Activated T-helper 1 cell treated with anti-CD3 and anti-CD28 coated beads, Interleukin-12 subunit alpha, Interleukin-12 subunit beta, Interleukin-2, Interleukin-4 antibody, amounts not matched to agents 30 ng/mL and 10 ng/mL and 1 ng/mL, durations not matched to agents 14 hours and 24 hours and 36 hours (primary cell): ENCODE measurements at regions of chr6 and their contacts with region 1.

Region 1: DNA sequence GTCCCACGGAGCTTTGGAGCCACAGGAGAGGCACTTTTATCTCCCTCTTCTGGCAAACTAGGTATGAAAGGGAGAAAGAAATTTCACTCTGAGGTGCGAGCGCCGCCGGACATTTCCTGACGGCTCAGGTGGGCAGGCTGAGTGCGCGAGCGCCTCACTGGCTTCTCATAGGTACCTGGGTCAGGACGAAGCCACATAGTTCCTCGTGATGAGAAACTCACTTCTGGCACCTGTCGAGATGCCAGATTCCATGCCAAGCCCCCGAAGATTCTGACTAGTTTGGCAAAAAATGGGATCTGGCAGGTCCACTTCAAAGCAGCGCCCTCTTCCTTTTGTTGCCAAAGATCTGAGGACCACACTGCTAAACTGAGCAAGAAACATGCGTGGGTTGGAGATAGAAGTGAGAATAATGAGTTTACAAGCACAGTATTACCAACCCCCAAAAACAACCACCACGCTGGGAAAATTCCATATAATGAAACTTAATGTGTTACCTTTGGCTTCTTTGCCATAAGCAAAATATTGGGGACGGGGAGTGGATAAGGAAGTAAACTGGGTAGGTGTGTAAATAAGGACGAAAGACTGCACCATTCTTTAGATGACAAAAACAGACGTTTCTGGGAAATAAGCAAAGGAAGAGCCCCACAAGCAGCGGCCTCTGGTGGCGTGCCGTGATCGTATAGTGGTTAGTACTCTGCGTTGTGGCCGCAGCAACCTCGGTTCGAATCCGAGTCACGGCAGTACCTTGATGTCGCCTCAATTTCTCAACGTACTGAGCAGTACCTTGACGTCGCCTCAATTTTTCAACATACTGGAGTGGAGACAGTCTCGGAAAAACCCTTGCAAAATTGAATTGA is 89.8 kb upstream of the PRSS16 start:
- DNase-seq: peak; percentile 70
- H3K4me3 Mint-ChIP-seq: peak overlapping the region; percentile 77
- H3K27ac Mint-ChIP-seq: peak overlapping the region; percentile 80
- H3K4me1 Mint-ChIP-seq: peaks cover 47% of the 10 kb centered on the region
- H3K27me3 Mint-ChIP-seq: peaks cover 2% of the 10 kb centered on the region

Region 2: DNA sequence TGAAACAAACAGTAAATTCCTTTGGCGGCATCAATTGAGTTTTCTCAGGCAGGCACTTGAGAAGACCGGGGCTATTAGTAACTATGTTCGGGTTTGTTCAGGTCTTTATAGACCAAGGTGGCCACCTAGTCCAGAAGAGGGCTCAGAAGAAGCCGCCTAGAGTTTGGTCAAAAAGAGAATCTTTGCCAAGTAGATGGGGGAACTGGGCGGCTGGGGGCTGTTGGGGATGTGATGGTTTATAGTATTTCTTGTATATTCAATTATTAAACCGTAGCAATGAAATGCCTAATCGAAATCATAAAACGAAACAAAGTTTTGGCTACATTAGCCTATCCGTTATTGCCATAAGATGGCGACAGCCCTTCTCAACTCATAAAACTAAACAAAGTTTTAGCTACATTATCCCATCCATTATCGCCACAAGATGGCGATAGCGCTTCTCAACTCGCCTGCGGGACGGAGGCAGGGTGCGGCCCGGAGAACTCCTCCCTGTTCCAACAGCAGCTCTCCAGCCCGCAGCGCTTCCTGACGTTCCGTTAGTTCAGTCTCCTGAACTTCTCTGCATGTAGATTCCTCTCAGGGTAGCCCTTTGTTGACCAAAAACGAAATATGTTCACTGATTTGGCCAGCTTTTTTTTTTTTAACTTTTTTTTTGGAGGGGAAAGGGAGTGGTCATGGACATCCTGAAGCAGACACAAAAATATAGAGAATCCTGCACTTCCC is 30.7 kb before region 1 on chr6:
- intact Hi-C with region 1: loop called (anchors 1 kb)
- DNase-seq: peak; percentile 83
- H3K4me3 Mint-ChIP-seq: peak overlapping the region; percentile 88
- H3K27ac Mint-ChIP-seq: peak overlapping the region; percentile 90
- H3K4me1 Mint-ChIP-seq: peaks cover 37% of the 10 kb centered on the region
- H3K27me3 Mint-ChIP-seq: no peaks in the 10 kb centered on the region

Region 3: DNA sequence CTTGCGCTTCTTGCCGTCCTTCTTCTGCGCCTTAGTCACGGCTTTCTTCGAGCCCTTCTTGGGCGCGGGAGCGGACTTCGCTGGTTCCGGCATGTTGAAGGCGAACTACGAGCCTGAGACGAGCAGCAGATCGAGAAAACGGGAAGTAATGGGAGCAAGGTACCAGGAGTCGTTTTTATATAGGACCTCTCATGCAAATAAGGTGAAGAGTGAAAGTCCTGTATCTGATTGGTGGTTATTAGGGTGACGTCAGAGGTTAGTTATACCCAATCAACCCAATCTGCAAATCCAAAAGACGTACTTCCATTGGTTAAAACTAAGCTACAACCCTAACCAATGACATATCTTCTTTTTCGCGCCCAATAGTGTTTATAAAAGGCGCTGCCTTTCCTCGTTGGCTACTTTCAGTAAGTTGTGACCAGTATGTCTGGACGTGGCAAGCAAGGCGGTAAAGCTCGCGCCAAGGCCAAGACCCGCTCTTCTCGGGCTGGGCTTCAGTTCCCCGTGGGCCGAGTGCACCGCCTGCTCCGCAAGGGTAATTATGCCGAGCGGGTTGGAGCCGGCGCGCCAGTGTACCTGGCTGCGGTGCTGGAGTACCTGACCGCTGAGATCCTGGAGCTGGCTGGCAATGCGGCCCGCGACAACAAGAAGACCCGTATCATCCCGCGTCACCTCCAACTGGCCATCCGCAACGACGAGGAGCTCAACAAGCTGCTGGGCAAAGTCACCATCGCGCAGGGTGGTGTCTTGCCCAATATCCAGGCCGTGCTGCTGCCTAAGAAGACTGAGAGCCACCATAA is 10.8 kb before region 1 on chr6:
- intact Hi-C with region 1: loop called (anchors 1 kb)
- DNase-seq: peak; percentile 82
- H3K4me3 Mint-ChIP-seq: no peak overlapping the region
- H3K27ac Mint-ChIP-seq: no peak overlapping the region
- H3K4me1 Mint-ChIP-seq: peaks cover 17% of the 10 kb centered on the region
- H3K27me3 Mint-ChIP-seq: no peaks in the 10 kb centered on the region

Region 4: GRCh38 chr6:27518881-27519795 is 361.5 kb after region 1 on chr6:
- intact Hi-C with region 1: loop called (anchors 1 kb)
- DNase-seq: peak; percentile 40
- H3K4me3 Mint-ChIP-seq: peak overlapping the region; percentile 89
- H3K27ac Mint-ChIP-seq: peak overlapping the region; percentile 86
- H3K4me1 Mint-ChIP-seq: peaks cover 16% of the 10 kb centered on the region
- H3K27me3 Mint-ChIP-seq: peaks cover 25% of the 10 kb centered on the region

Region 5: GRCh38 chr6:27608916-27609883 is 451.5 kb after region 1 on chr6:
- intact Hi-C with region 1: loop called (anchors 1 kb)
- DNase-seq: no peak
- H3K4me3 Mint-ChIP-seq: no peak overlapping the region
- H3K27ac Mint-ChIP-seq: no peak overlapping the region
- H3K4me1 Mint-ChIP-seq: peaks cover 18% of the 10 kb centered on the region
- H3K27me3 Mint-ChIP-seq: peaks cover 28% of the 10 kb centered on the region